ENCODE measurements at regions of chr16 and their contacts with region 1.

Region 1: GRCh38 chr16:82936941-82937551 is 310.3 kb downstream of the CDH13 start:
- DNase-seq: peak; percentile 98
- H3K4me3 ChIP-seq: no peak overlapping the region
- H3K27ac ChIP-seq: peak overlapping the region; percentile 90
- H3K4me1 ChIP-seq: peaks cover 27% of the 10 kb centered on the region
- H3K27me3 ChIP-seq: no peaks in the 10 kb centered on the region
- CTCF ChIP-seq: no peak
- POLR2A ChIP-seq: peak; percentile 59

Region 2: GRCh38 chr16:82699711-82700495 is 237.1 kb before region 1 on chr16:
- CTCF ChIA-PET with region 1: no interaction called
- POLR2A ChIA-PET with region 1: no interaction called
- dilution Hi-C with region 1: no loop called
- intact Hi-C with region 1: loop called (anchors 2 kb)
- DNase-seq: peak; percentile 96
- H3K4me3 ChIP-seq: no peak overlapping the region
- H3K27ac ChIP-seq: peak overlapping the region; percentile 76
- H3K4me1 ChIP-seq: peaks cover 46% of the 10 kb centered on the region
- H3K27me3 ChIP-seq: no peaks in the 10 kb centered on the region
- CTCF ChIP-seq: no peak
- POLR2A ChIP-seq: no peak

Region 3: GRCh38 chr16:82814059-82814458 is 123.0 kb before region 1 on chr16:
- CTCF ChIA-PET with region 1: no interaction called
- POLR2A ChIA-PET with region 1: no interaction called
- dilution Hi-C with region 1: no loop called
- intact Hi-C with region 1: loop called (anchors 1 kb)
- DNase-seq: peak; percentile 46
- H3K4me3 ChIP-seq: no peak overlapping the region
- H3K27ac ChIP-seq: peak overlapping the region; percentile 41
- H3K4me1 ChIP-seq: peaks cover 23% of the 10 kb centered on the region
- H3K27me3 ChIP-seq: no peaks in the 10 kb centered on the region
- CTCF ChIP-seq: no peak
- POLR2A ChIP-seq: no peak

Region 4: DNA sequence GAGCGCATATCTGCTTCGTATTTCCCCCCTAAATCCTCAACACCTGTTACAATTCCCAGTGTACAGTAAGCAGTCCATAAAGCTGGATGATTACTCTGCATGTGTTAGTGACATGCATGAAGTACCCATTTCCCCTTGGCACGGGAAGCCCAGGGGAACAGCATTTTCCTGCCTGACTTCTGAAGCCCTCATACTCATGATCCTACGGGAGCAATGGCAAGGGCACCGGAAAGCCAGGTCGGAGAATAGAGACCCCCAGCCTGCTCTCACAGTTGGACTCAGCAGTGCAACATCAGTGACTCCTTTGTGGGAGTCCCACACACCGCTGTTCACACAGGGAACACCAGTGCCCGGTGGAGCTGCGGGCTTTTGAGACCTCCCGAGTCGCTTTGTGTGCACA is 26.6 kb after region 1 on chr16:
- CTCF ChIA-PET with region 1: no interaction called
- POLR2A ChIA-PET with region 1: no interaction called
- dilution Hi-C with region 1: no loop called
- intact Hi-C with region 1: no loop called
- DNase-seq: no peak
- H3K4me3 ChIP-seq: no peak overlapping the region
- H3K27ac ChIP-seq: no peak overlapping the region
- H3K4me1 ChIP-seq: no peaks in the 10 kb centered on the region
- H3K27me3 ChIP-seq: no peaks in the 10 kb centered on the region
- CTCF ChIP-seq: no peak
- POLR2A ChIP-seq: no peak

Region 5: GRCh38 chr16:82979406-82980111 is 42.5 kb after region 1 on chr16:
- CTCF ChIA-PET with region 1: no interaction called
- POLR2A ChIA-PET with region 1: interaction called, 3 read pairs
- dilution Hi-C with region 1: no loop called
- intact Hi-C with region 1: loop called (anchors 1 kb)
- DNase-seq: peak; percentile 88
- H3K4me3 ChIP-seq: no peak overlapping the region
- H3K27ac ChIP-seq: peak overlapping the region; percentile 62
- H3K4me1 ChIP-seq: peaks cover 23% of the 10 kb centered on the region
- H3K27me3 ChIP-seq: no peaks in the 10 kb centered on the region
- CTCF ChIP-seq: no peak
- POLR2A ChIP-seq: no peak

Region 6: DNA sequence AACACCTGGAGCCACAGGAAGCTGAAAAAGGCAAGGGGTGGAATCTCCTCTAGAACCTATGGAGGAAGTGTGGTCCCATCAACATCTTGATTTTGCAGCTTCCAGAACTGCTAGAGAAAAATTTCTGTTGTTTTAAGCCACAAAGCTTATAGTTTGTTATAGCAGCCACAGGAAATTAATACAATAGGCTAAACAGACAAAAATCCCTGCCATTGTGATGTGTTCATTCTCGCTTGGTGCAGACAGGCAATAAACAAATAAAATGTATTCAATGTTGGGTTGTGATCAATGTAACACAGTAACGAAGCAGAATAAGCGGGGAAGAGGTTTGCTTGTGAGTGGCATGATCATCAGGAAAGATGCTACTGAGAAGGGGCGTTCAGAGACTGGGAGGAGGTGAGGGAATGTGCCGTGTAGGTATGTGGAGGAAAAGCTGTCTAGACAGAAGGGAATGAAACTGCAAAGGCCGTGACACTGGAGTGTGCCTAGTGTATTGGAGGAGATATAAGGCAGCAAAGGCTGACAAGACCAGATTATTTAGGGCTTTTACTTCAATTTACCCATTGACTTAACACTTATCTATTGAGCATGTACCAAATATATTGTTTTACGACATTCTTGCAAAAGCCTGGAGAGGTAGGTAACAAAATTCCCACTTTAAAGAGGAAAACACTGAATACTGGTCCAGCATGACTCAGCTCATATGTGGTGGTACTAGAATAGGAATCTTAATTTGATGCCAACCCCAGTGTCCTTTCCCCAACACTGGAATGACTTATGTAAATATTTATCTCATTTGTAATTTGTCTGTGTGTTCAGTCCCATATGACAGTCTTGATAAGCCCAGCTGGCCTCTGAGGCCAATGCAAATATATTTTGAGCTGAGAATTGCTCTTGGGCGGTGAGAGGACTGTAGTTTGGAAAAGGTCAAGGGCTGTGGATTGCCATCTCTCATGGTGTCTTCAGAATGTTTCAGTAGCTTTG is 65.6 kb after region 1 on chr16:
- CTCF ChIA-PET with region 1: no interaction called
- POLR2A ChIA-PET with region 1: no interaction called
- dilution Hi-C with region 1: no loop called
- intact Hi-C with region 1: loop called (anchors 1 kb)
- DNase-seq: peak; percentile 88
- H3K4me3 ChIP-seq: no peak overlapping the region
- H3K27ac ChIP-seq: peak overlapping the region; percentile 73
- H3K4me1 ChIP-seq: peaks cover 36% of the 10 kb centered on the region
- H3K27me3 ChIP-seq: no peaks in the 10 kb centered on the region
- CTCF ChIP-seq: no peak
- POLR2A ChIP-seq: peak; percentile 49

Region 7: DNA sequence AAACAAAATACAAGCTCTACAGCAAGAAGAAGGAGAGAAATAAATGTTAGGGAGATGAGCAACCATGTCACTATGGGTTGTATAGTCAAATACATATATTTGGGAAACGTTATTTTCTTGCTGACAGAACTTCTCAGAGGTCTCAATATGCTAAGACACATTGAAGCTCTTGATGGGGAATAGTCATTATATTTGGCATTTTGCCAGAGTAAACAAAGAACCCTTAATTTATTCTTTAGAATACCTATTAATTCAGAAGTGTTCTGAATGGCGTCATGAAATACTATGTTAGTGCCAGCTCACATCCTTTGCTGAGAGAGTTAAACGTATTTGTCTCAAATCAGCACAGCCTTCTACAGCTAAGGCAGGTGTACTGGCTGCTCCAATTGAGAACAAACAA is 148.6 kb after region 1 on chr16:
- CTCF ChIA-PET with region 1: no interaction called
- POLR2A ChIA-PET with region 1: no interaction called
- dilution Hi-C with region 1: no loop called
- intact Hi-C with region 1: no loop called
- DNase-seq: no peak
- H3K4me3 ChIP-seq: no peak overlapping the region
- H3K27ac ChIP-seq: no peak overlapping the region
- H3K4me1 ChIP-seq: no peaks in the 10 kb centered on the region
- H3K27me3 ChIP-seq: no peaks in the 10 kb centered on the region
- CTCF ChIP-seq: no peak
- POLR2A ChIP-seq: no peak